CD8-positive, alpha-beta memory T cell (primary cell): ENCODE measurements at regions of chr1 and their contacts with region 1.

Region 1: GRCh38 chr1:211514030-211514754 is 22.2 kb upstream of the RD3 start:
- DNase-seq: peak; percentile 39 to 76 (median 44)
- H3K4me3 ChIP-seq: no peak overlapping the region
- H3K4me3 Mint-ChIP-seq: peak overlapping the region; percentile 55 to 90 (median 73)
- H3K27ac ChIP-seq: no peak overlapping the region
- H3K27ac Mint-ChIP-seq: peak overlapping the region in 2 of 8 donors; percentile 52 to 69
- H3K4me1 ChIP-seq: peaks cover 10% of the 10 kb centered on the region
- H3K4me1 Mint-ChIP-seq: peaks cover 11 to 17% (median 13%) of the 10 kb centered on the region in 3 donors
- H3K27me3 ChIP-seq: no peaks in the 10 kb centered on the region
- H3K27me3 Mint-ChIP-seq: peaks cover 2 to 3% of the 10 kb centered on the region in 2 donors

Region 2: DNA sequence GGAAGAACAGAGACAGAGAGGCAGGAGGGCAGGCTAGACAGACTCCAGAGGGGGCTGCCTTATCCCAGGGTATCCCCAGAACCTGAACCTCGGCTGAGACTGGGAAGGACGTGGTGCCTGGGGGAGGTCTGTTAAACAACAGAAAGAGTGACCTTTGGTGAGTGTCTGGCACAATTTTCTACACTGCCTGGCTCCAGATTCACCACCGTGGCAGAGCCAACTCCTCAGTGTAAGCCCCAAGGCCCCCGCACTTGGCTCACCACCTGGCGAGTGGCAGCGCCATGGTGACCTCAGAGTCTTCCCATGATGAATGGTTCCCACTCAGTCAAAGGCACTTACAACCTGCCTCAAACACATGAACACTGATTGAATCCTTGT is 28.7 kb before region 1 on chr1:
- CTCF ChIA-PET with region 1: no interaction called
- POLR2A ChIA-PET with region 1: no interaction called
- DNase-seq: no peak
- H3K4me3 ChIP-seq: no peak overlapping the region
- H3K4me3 Mint-ChIP-seq: no peak overlapping the region
- H3K27ac ChIP-seq: no peak overlapping the region
- H3K27ac Mint-ChIP-seq: no peak overlapping the region
- H3K4me1 ChIP-seq: no peaks in the 10 kb centered on the region
- H3K4me1 Mint-ChIP-seq: no peaks in the 10 kb centered on the region
- H3K27me3 ChIP-seq: no peaks in the 10 kb centered on the region
- H3K27me3 Mint-ChIP-seq: peaks cover 12 to 20% of the 10 kb centered on the region in 2 donors

Region 3: GRCh38 chr1:211503542-211503941 is 10.7 kb before region 1 on chr1:
- CTCF ChIA-PET with region 1: interaction called, 37 read pairs
- POLR2A ChIA-PET with region 1: no interaction called
- DNase-seq: no peak
- H3K4me3 ChIP-seq: no peak overlapping the region
- H3K4me3 Mint-ChIP-seq: no peak overlapping the region
- H3K27ac ChIP-seq: no peak overlapping the region
- H3K27ac Mint-ChIP-seq: peak overlapping the region in 1 of 8 donors; percentile 80
- H3K4me1 ChIP-seq: no peaks in the 10 kb centered on the region
- H3K4me1 Mint-ChIP-seq: no peaks in the 10 kb centered on the region
- H3K27me3 ChIP-seq: no peaks in the 10 kb centered on the region
- H3K27me3 Mint-ChIP-seq: peaks cover 7 to 26% of the 10 kb centered on the region in 2 donors